ENCODE measurements at regions of chr5 and their contacts with region 1.

Region 1: DNA sequence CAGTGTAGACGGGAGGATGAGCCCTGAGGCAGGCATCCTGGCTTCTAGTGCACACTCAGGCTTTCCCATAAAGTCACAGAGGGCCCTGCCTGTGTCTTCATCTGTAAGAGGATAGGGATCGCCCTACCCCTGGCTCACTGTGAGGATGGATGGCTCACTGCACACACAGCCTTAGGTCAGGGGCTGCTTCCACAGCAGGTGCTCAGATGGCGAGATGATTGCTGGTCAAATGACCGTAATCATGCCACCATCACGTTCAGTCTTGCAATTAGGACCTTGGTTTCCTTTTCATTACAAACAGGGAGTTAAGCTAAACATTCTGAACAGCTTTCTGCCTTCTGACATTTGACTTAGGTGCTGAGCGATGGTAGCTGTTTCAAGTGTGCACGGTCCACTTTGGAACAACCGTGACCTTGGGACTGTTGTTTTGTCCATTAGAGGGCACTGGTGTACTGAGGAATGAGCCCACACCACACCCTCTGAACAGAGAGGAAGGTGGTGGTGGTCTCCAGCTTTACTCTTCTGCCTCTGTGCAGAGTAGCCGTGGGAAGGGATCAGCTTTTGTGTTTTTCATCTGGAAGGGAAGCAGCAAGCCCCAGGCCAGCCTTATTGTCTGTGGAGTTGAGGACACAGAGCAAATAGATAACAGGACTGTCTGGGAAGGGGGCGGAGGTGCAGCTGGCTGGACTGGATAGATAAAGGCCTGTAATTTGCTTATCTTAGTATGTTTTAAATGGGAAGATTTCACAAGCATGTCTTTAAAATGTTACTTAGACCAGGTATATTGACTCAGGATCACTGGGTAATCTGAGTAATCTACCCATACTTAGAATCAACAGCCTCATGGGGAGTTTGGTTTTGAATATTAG is 183.1 kb downstream of the TRIO start:
- DNase-seq: peak; percentile 69
- H3K4me3 ChIP-seq: no peak overlapping the region
- H3K4me3 Mint-ChIP-seq: no peak overlapping the region
- H3K27ac Mint-ChIP-seq: peak overlapping the region; percentile 24
- H3K4me1 ChIP-seq: peaks cover 13% of the 10 kb centered on the region
- H3K4me1 Mint-ChIP-seq: peaks cover 16% of the 10 kb centered on the region
- H3K27me3 ChIP-seq: no peaks in the 10 kb centered on the region
- H3K27me3 Mint-ChIP-seq: no peaks in the 10 kb centered on the region
- CTCF ChIP-seq: peak; percentile 48 to 59

Region 2: DNA sequence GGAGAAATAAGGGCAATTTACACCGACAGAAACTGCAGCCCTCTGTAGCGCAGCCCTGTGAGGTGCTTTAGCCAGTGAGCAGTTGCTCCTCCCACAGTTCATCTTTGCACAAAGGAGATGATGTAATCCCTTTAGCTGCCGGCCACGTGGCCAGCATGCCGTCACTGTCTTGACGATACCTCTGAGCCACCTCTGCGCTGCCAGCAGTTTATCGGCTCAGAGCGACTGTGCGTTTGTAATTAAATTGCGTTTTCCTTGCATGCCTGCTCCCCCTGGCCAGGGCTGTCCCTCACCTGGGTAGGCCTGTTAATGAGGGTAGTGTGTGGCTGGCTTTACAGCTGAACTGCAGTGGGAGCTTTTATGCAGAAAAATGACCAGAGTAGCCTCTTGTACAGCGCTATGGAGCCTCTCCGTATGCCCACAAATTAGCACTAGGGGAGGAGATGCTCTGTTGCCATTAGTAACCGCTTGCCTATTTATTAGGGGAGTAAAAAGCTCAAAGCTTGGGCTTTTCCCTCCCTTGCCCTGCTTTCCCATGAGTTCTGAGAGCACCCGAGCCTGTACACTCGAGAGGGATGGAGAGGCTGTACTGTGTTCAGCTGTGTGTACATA is 76.1 kb before region 1 on chr5:
- CTCF ChIA-PET with region 1: no interaction called
- POLR2A ChIA-PET with region 1: no interaction called
- intact Hi-C with region 1: no loop called
- DNase-seq: peak; percentile 84 to 87
- H3K4me3 ChIP-seq: peak overlapping the region; percentile 31
- H3K4me3 Mint-ChIP-seq: peak overlapping the region; percentile 70
- H3K27ac Mint-ChIP-seq: peak overlapping the region; percentile 80
- H3K4me1 ChIP-seq: peaks cover 8% of the 10 kb centered on the region; the same call in 1 of the 2 replicates
- H3K4me1 Mint-ChIP-seq: peaks cover 19% of the 10 kb centered on the region
- H3K27me3 ChIP-seq: no peaks in the 10 kb centered on the region
- H3K27me3 Mint-ChIP-seq: no peaks in the 10 kb centered on the region
- CTCF ChIP-seq: no peak

Region 3: DNA sequence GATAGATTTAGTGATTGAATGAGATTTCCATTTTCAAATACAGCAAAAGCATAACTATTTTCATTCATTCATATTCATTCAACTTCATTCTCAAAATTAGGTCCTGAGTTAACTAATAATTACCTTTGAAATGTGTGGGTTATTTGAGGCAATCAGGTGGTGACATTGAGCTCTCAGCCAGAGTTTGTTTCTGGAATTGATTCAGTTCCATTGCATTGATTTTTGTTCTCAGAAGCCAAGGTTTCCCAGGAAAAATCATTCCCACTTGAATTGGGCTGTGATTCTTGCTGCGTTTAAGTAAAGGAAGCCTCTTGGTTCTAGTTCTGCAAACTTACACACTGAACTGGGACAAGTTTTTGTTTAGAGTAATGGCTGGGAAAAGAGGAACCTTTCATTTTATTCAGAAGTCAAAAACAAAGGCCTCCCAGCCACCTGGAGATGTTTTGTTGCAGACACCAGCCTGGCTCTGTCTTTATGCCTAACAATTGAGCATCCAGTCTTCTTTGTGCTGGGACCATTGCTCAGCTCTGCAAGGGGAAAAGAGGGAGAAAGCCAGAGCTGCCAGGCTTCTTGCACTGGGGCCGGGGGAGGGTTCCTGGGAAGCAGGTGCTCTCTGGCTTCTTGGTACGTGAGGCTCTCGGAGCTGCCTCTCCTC is 15.4 kb after region 1 on chr5:
- CTCF ChIA-PET with region 1: interaction called, 3 read pairs
- POLR2A ChIA-PET with region 1: no interaction called
- intact Hi-C with region 1: loop called (anchors 2 kb)
- DNase-seq: no peak
- H3K4me3 ChIP-seq: no peak overlapping the region
- H3K4me3 Mint-ChIP-seq: no peak overlapping the region
- H3K27ac Mint-ChIP-seq: no peak overlapping the region
- H3K4me1 ChIP-seq: peaks cover 9% of the 10 kb centered on the region; the same call in 1 of the 2 replicates
- H3K4me1 Mint-ChIP-seq: no peaks in the 10 kb centered on the region
- H3K27me3 ChIP-seq: no peaks in the 10 kb centered on the region
- H3K27me3 Mint-ChIP-seq: no peaks in the 10 kb centered on the region
- CTCF ChIP-seq: no peak

Region 4: DNA sequence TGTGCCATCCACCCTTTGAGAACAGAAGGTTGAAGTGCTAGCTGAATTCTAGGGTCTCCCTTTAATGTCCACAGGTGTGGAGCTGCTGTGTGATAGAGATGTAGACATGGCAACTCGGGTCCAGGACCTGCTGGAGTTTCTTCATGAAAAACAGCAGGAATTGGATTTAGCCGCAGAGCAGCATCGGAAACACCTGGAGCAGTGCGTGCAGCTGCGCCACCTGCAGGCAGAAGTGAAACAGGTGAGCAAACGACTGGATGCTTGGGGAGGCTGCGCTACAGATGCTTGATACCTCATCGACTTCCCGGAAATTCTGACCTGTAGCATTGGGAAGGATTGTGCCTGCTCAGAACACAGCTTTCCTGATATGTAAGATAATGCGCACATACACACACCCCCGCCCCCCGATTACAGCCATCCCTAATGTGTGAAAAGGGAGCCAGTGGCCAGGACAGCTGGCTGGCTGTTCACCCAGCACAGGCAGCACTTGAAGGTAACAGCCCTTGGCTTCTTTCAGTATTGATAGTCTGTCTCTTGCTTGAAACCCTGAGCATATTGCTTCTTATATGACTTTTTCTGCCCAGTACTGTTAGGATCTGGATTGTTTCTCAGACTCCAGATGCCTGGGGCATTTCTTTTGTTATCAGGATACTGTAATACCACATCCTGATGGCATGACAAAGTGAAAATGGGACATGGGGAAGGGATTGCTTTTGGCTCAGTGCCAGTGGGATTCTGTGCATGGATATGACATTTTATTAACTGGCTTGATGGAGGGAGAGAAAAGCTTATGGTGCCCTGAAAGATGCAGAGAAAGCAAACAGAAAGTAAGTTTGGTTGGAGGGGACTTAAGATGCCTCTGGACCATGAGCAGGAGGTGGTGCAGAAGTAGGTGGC is 38.6 kb after region 1 on chr5:
- CTCF ChIA-PET with region 1: no interaction called
- POLR2A ChIA-PET with region 1: no interaction called
- intact Hi-C with region 1: loop called (anchors 1 kb)
- DNase-seq: peak; percentile 60 to 63
- H3K4me3 ChIP-seq: no peak overlapping the region
- H3K4me3 Mint-ChIP-seq: no peak overlapping the region
- H3K27ac Mint-ChIP-seq: no peak overlapping the region
- H3K4me1 ChIP-seq: no peaks in the 10 kb centered on the region
- H3K4me1 Mint-ChIP-seq: no peaks in the 10 kb centered on the region
- H3K27me3 ChIP-seq: no peaks in the 10 kb centered on the region
- H3K27me3 Mint-ChIP-seq: no peaks in the 10 kb centered on the region
- CTCF ChIP-seq: peak; percentile 72 to 90

Region 5: GRCh38 chr5:14743601-14744295 is 417.5 kb after region 1 on chr5:
- CTCF ChIA-PET with region 1: no interaction called
- POLR2A ChIA-PET with region 1: no interaction called
- intact Hi-C with region 1: no loop called
- DNase-seq: no peak
- H3K4me3 ChIP-seq: no peak overlapping the region
- H3K4me3 Mint-ChIP-seq: no peak overlapping the region
- H3K27ac Mint-ChIP-seq: no peak overlapping the region
- H3K4me1 ChIP-seq: no peaks in the 10 kb centered on the region
- H3K4me1 Mint-ChIP-seq: no peaks in the 10 kb centered on the region
- H3K27me3 ChIP-seq: no peaks in the 10 kb centered on the region
- H3K27me3 Mint-ChIP-seq: no peaks in the 10 kb centered on the region
- CTCF ChIP-seq: no peak

Measured in Caco-2 (cell line).